ENCODE measurements at regions of chr14 and their contacts with region 1.

Region 1: DNA sequence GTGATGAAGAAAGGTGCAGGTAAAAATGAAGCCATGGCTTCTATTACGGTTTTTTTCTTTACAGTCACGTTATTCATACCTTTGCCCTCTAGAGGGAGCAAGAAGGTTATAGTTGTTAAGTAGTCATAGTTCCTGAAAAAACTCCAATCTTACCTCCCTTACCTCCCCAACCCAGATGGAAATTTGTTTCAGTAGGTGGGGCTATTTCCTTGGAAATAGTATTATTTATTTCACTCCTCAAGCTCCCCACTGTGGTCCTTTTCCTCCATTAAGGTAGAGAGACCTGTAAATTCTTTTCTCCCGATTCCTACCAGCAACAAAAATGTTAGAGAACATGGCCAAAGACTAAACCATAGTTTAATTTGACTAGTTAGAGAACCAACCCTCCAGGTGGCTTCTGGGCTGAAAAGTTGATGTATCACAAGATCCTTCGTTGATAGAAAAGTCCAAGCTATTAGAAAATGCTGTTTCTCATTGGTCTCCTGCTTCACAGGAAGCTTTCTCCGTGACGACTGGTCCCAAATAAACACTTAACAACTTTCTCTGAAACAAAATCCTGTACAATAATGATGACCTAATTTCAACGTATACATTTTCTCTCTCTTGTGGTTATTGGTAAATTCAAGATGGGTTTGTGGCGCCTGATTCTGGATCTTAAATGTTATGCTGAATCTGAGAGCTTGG is 43.5 kb downstream of the TMX1 start:
- DNase-seq: peak in 1 of 2 experiments; percentile 89
- H3K4me3 ChIP-seq: no peak overlapping the region
- H3K4me1 ChIP-seq: peaks cover 3% of the 10 kb centered on the region; the same call in 1 of the 2 replicates
- H3K27me3 ChIP-seq: no peaks in the 10 kb centered on the region

Region 2: DNA sequence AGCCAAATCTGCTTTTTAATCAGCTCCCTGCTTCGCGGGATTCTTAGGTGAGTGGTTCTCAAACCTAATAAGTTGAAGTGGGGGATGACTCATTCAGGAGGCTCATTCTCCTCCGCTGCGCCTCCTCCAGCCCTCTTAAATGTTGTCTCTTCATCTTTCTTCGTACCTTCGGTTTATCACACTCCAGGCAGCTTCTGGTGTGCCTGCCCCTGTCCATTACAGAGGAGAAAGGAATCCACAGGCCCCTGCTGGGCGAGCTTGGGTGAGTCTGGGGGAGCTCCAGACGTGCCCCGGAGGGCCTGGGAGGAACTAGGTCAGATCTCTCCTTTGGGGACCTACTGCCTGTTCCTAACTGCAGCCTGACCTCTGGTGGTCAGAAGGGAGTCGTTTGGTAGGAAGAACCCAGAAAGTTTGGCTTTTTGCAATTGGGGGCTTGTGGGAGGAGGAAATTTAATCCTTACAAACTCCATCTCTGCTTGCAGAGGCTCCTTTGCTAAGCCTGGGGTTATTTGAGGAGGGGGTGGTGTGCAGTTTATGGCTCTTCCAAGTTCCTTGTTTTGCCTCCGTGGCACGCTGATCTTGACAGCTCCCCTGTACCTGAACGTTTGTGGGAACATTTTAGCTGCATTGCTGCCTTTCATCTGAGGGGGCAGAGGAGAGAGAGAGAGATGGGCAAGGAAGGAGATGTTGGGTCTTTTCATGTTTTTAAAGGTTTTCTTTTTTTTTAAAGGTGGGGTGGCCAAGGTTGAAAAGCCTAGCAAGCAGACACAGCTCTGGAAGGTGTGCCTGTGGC is 492.8 kb after region 1 on chr14:
- in situ Hi-C with region 1: loop called (anchors 5 kb)
- DNase-seq: peak; percentile 60 to 78
- H3K4me3 ChIP-seq: no peak overlapping the region
- H3K4me1 ChIP-seq: no peaks in the 10 kb centered on the region; the same call in 1 of the 2 replicates
- H3K27me3 ChIP-seq: peaks cover 3% of the 10 kb centered on the region; the same call in 1 of the 2 replicates

Region 3: DNA sequence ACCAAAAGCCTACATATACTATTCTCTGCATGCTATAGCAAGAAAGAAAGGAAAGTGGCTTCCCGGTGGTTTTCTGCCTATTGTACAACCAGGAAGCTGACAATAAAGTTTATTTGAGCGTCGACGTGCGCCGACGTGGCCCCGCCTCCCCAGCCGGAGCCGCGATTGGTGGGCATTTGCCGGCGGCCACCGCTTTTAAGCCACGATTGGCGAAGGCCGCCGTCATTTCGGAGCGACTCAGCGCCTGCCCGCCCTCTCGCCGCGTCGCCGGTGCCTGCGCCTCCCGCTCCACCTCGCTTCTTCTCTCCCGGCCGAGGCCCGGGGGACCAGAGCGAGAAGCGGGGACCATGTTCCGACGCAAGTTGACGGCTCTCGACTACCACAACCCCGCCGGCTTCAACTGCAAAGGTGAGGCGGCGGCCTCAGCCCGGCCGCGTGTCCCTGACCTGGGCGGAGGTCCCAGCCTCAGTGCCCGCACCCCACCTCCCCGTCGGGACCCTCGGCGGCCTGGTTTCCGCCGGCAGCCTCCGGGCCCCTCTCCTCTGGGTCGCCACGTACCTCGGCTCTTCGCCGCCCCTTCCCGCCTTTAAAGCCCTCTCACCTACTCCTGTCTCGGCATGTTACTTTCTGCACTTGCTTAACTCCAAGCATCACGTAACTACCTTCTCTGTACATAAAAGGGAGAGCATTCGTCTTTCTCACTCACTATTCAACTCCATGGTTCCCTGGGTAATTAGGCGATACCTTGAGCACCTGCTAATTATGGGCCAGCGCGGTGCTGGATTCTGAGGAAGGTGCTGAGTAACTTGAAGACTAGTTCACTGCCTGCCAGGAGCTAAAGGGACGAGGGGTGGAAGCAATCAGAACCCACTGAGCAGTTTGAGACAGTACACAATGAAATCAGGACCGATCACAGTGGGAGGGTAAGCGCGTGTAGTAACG is 706.0 kb after region 1 on chr14 and contains the start of gene RTRAF:
- in situ Hi-C with region 1: loop called (anchors 25 kb)
- DNase-seq: peak; percentile 89 to 94
- H3K4me3 ChIP-seq: peak within 1 kb of the TSS; percentile 83
- H3K4me1 ChIP-seq: peaks cover 13% of the 10 kb centered on the region
- H3K27me3 ChIP-seq: no peaks in the 10 kb centered on the region

Region 4: DNA sequence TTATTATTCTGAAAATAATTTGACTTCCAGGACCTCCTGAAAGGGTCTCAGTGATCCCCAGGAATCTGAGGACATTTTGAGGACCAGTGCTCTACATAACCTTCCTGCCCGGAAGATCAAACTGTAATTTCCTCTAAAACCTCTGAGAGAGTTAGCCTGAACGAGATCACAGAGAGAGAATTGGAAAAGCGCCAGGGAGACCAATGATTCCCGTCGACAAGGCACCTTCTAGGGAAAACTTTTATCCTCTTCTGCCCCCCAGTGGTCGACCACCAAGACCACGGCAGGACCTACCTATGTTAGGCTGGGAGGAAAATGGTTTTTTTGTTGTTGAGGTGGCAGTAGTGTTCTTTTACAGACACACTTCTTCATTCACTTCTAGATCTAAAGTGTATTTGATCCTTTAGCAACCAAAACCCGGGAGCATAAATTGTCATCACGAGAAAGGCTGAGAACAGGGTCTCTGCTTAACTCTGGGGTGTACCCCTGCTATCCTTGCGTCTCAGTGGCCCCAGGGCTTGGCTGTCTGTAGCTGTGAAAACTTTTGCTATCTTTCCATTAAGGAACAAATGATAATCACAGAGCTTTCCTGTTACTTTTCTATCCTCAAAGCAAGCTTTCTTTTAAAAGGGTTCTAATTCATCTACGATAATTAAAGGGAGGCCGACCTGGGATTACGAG is 848.2 kb after region 1 on chr14:
- in situ Hi-C with region 1: loop called (anchors 25 kb)
- DNase-seq: peak; percentile 88 to 95
- H3K4me3 ChIP-seq: no peak overlapping the region
- H3K4me1 ChIP-seq: peaks cover 4% of the 10 kb centered on the region
- H3K27me3 ChIP-seq: no peaks in the 10 kb centered on the region

Measured in HAP-1 (cell line).